Heart left ventricle (tissue), 16 donors: ENCODE measurements at regions of chr1 and their contacts with region 1.

Region 1: GRCh38 chr1:235415008-235415904 is 48.0 kb downstream of the TBCE start:
- DNase-seq: peak in 4 of 5 donors; percentile 40 to 63 (median 56)
- ATAC-seq: peak; percentile 78 to 80 (median 80)
- H3K4me3 ChIP-seq: no peak overlapping the region
- H3K27ac ChIP-seq: no peak overlapping the region
- H3K4me1 ChIP-seq: peaks cover 0 to 9% (median 0%) of the 10 kb centered on the region in 12 donors
- H3K27me3 ChIP-seq: no peaks in the 10 kb centered on the region
- CTCF ChIP-seq: peak; percentile 60 to 85 (median 72)
- POLR2A ChIP-seq: no peak

Region 2: GRCh38 chr1:234478481-234479309 is 936.6 kb before region 1 on chr1 and contains the start of gene TARBP1:
- intact Hi-C with region 1: loop called in 4 of 10 experiments (anchors 10 kb)
- DNase-seq: peak; percentile 68 to 87 (median 72)
- ATAC-seq: peak; percentile 81 to 93 (median 86)
- H3K4me3 ChIP-seq: peak within 1 kb of the TSS; percentile 12 to 96 (median 82)
- H3K27ac ChIP-seq: peak within 1 kb of the TSS; percentile 71 to 97 (median 88)
- H3K4me1 ChIP-seq: peaks cover 0 to 37% (median 11%) of the 10 kb centered on the region in 12 donors
- H3K27me3 ChIP-seq: peaks cover 0 to 7% (median 0%) of the 10 kb centered on the region in 9 donors
- CTCF ChIP-seq: peak in 6 of 12 donors; percentile 5 to 33 (median 22)
- POLR2A ChIP-seq: peak in 1 of 2 donors; percentile 66
- total RNA-seq, gene TARBP1: 7.1 to 18.2 (median 9.9) TPM

Region 3: GRCh38 chr1:235100194-235100772 is 315.0 kb before region 1 on chr1:
- intact Hi-C with region 1: loop called in 7 of 10 experiments (anchors 5 to 10 kb)
- DNase-seq: peak in 3 of 5 donors; percentile 39 to 52 (median 42)
- ATAC-seq: peak in 2 of 4 donors; percentile 39 to 54
- H3K4me3 ChIP-seq: no peak overlapping the region
- H3K27ac ChIP-seq: peak overlapping the region in 1 of 12 donors; percentile 9
- H3K4me1 ChIP-seq: peaks cover 0 to 9% (median 1%) of the 10 kb centered on the region in 12 donors
- H3K27me3 ChIP-seq: no peaks in the 10 kb centered on the region
- CTCF ChIP-seq: no peak
- POLR2A ChIP-seq: no peak

Region 4: GRCh38 chr1:235253219-235253962 is 161.9 kb before region 1 on chr1:
- intact Hi-C with region 1: loop called (anchors 1 to 2 kb)
- DNase-seq: peak in 4 of 5 donors; percentile 45 to 61 (median 50)
- ATAC-seq: peak; percentile 78 to 95 (median 93)
- H3K4me3 ChIP-seq: no peak overlapping the region
- H3K27ac ChIP-seq: no peak overlapping the region
- H3K4me1 ChIP-seq: peaks cover 0 to 13% (median 2%) of the 10 kb centered on the region in 12 donors
- H3K27me3 ChIP-seq: no peaks in the 10 kb centered on the region
- CTCF ChIP-seq: peak; percentile 70 to 93 (median 88)
- POLR2A ChIP-seq: no peak

Region 5: GRCh38 chr1:235336903-235337302 is 78.4 kb before region 1 on chr1:
- intact Hi-C with region 1: loop called in 1 of 10 experiments (anchors 10 kb)
- DNase-seq: peak in 1 of 5 donors; percentile 23
- ATAC-seq: peak; percentile 89 to 97 (median 96)
- H3K4me3 ChIP-seq: peak overlapping the region in 1 of 12 donors; percentile 28
- H3K27ac ChIP-seq: peak overlapping the region in 2 of 12 donors; percentile 13 to 68
- H3K4me1 ChIP-seq: peaks cover 0 to 34% (median 19%) of the 10 kb centered on the region in 12 donors
- H3K27me3 ChIP-seq: no peaks in the 10 kb centered on the region
- CTCF ChIP-seq: no peak
- POLR2A ChIP-seq: no peak

Region 6: GRCh38 chr1:235486321-235486720 is 71.1 kb after region 1 on chr1:
- intact Hi-C with region 1: no loop called
- DNase-seq: no peak
- ATAC-seq: no peak
- H3K4me3 ChIP-seq: no peak overlapping the region
- H3K27ac ChIP-seq: no peak overlapping the region
- H3K4me1 ChIP-seq: peaks cover 0 to 1% (median 0%) of the 10 kb centered on the region in 12 donors
- H3K27me3 ChIP-seq: no peaks in the 10 kb centered on the region
- CTCF ChIP-seq: no peak
- POLR2A ChIP-seq: no peak